ENCODE measurements at regions of chr14 and their contacts with region 1.

Region 1: GRCh38 chr14:67514650-67515385 is 18.3 kb upstream of the PLEKHH1 start:
- DNase-seq: no peak
- H3K4me3 ChIP-seq: peak overlapping the region; percentile 65 to 71 (median 71)
- H3K27ac ChIP-seq: no peak overlapping the region
- H3K4me1 ChIP-seq: peaks cover 19% of the 10 kb centered on the region
- H3K27me3 ChIP-seq: no peaks in the 10 kb centered on the region
- CTCF ChIP-seq: no peak

Region 2: GRCh38 chr14:67461341-67462098 is 53.3 kb before region 1 on chr14:
- CTCF ChIA-PET with region 1: no interaction called
- dilution Hi-C with region 1: loop called (anchors 5 kb)
- in situ Hi-C with region 1: no loop called
- intact Hi-C with region 1: no loop called
- DNase-seq: peak; percentile 61
- H3K4me3 ChIP-seq: no peak overlapping the region
- H3K27ac ChIP-seq: no peak overlapping the region
- H3K4me1 ChIP-seq: no peaks in the 10 kb centered on the region
- H3K27me3 ChIP-seq: no peaks in the 10 kb centered on the region
- CTCF ChIP-seq: no peak

Region 3: GRCh38 chr14:67557126-67557525 is 42.3 kb after region 1 on chr14:
- CTCF ChIA-PET with region 1: no interaction called
- dilution Hi-C with region 1: no loop called
- in situ Hi-C with region 1: no loop called
- intact Hi-C with region 1: no loop called
- DNase-seq: peak; percentile 74
- H3K4me3 ChIP-seq: no peak overlapping the region
- H3K27ac ChIP-seq: peak overlapping the region; percentile 12
- H3K4me1 ChIP-seq: peaks cover 32% of the 10 kb centered on the region
- H3K27me3 ChIP-seq: no peaks in the 10 kb centered on the region
- CTCF ChIP-seq: no peak